Activated CD8-positive, alpha-beta memory T cell treated with anti-CD3 and anti-CD28 coated beads, Interleukin-2, amount 10 ng/mL, durations not matched to agents 7 days and 5 days (primary cell): ENCODE measurements at regions of chr20 and their contacts with region 1.

Region 1: DNA sequence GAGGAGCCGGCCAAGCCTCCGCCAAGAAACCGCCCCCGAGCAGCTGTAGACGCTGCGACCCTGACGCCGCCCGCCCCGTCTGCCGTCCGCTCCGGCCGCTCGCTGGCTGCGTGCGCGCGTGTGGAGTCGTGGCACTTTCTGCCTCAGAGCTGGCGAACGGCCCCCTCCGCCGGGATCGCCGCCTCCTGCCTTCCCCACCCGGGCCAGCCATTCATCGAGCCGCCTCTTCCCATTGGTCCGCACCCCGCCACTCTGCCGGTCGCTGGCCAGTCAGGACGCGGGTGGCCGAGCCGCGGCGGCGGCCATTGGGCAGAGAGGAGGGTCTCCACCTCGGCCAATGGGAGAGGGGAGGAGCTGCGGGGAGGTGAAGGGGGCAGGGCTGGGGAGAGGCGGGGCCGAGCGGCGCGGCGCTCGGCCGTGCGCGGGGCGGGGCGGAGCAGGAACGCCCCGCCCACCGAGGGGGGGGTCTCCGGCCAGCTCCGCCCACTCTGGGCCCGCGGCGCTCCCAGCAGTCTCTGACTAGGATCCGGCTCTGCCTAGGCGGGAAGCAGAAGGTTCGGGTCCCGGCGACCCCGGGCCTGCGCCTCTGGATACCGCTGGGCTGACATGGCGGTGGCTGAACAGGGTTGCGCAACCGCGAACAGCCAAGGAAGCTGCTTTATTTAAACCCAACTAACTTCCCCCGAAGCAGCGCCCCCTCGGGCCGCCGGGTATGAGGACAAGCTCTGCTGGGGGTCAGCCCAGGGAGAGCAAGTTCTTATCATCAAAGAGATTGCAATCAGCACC is at the start of gene RRBP1:
- DNase-seq: peak; percentile 98
- ATAC-seq: peak; percentile 95
- H3K4me3 Mint-ChIP-seq: peak within 1 kb of the TSS; percentile 76
- H3K27ac Mint-ChIP-seq: peak within 1 kb of the TSS; percentile 84
- H3K4me1 Mint-ChIP-seq: peaks cover 24% of the 10 kb centered on the region
- H3K27me3 Mint-ChIP-seq: peaks cover 37% of the 10 kb centered on the region
- total RNA-seq, gene RRBP1: 55.7 to 59.6 TPM

Region 2: DNA sequence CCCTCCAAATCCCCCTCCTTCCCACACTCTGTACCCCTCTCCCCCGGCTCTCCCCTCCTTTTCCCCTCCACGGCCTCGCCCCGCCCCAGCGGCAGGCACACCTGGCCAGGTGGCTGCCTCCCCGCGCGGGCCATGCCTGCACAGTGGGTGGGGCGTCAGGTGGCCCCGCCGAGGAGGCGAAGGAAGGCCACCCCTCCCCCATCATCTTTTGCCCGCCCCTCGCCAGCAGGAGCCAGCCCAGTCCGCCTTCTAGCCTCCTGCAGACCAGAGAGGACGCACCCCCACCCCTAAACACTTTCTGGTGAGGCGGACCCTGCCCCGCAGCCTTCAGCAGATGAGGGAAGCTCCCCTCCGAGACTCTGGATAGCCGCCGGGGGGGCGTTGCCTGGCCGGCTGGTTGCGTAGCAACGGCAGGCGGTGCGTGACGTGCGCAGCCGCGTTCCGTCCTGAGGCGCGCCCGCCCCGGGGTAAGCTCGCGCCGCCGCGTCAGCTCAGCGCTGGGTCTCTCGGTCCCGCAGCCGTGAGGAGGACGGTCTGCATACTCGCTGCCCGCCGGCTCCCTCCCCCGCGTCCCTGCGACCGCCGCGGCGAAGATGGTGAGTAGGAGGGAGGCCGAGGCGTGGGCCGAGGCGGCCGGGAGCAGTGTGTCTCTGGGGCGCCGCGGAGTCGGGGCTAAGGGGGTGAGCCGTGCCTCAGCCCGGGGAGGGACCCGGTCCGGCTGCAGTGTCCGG is 112.5 kb before region 1 on chr20 and contains the start of gene DSTN:
- CTCF ChIA-PET with region 1: interaction called, 27 read pairs
- DNase-seq: peak; percentile 91
- ATAC-seq: peak; percentile 90
- H3K4me3 Mint-ChIP-seq: peak within 1 kb of the TSS; percentile 88
- H3K27ac Mint-ChIP-seq: peak within 1 kb of the TSS; percentile 89
- H3K4me1 Mint-ChIP-seq: peaks cover 29% of the 10 kb centered on the region
- H3K27me3 Mint-ChIP-seq: peaks cover 21% of the 10 kb centered on the region
- total RNA-seq, gene DSTN: 55.8 to 78.3 TPM

Region 3: GRCh38 chr20:17655865-17656479 is 26.3 kb before region 1 on chr20:
- CTCF ChIA-PET with region 1: no interaction called
- DNase-seq: no peak
- ATAC-seq: no peak
- H3K4me3 Mint-ChIP-seq: no peak overlapping the region
- H3K27ac Mint-ChIP-seq: no peak overlapping the region
- H3K4me1 Mint-ChIP-seq: peaks cover 6% of the 10 kb centered on the region
- H3K27me3 Mint-ChIP-seq: no peaks in the 10 kb centered on the region

Region 4: GRCh38 chr20:17796091-17796563 is 113.8 kb after region 1 on chr20:
- CTCF ChIA-PET with region 1: no interaction called
- DNase-seq: no peak
- ATAC-seq: no peak
- H3K4me3 Mint-ChIP-seq: no peak overlapping the region
- H3K27ac Mint-ChIP-seq: no peak overlapping the region
- H3K4me1 Mint-ChIP-seq: no peaks in the 10 kb centered on the region
- H3K27me3 Mint-ChIP-seq: peaks cover 40% of the 10 kb centered on the region

Region 5: GRCh38 chr20:17849901-17850683 is 167.8 kb after region 1 on chr20:
- CTCF ChIA-PET with region 1: interaction called, 14 read pairs
- DNase-seq: no peak
- ATAC-seq: no peak
- H3K4me3 Mint-ChIP-seq: no peak overlapping the region
- H3K27ac Mint-ChIP-seq: no peak overlapping the region
- H3K4me1 Mint-ChIP-seq: peaks cover 44% of the 10 kb centered on the region
- H3K27me3 Mint-ChIP-seq: peaks cover 17% of the 10 kb centered on the region

Region 6: GRCh38 chr20:17898548-17898994 is 216.3 kb after region 1 on chr20:
- CTCF ChIA-PET with region 1: interaction called, 30 read pairs
- DNase-seq: peak; percentile 79
- ATAC-seq: peak; percentile 81
- H3K4me3 Mint-ChIP-seq: no peak overlapping the region
- H3K27ac Mint-ChIP-seq: no peak overlapping the region
- H3K4me1 Mint-ChIP-seq: peaks cover 39% of the 10 kb centered on the region
- H3K27me3 Mint-ChIP-seq: peaks cover 48% of the 10 kb centered on the region

Region 7: DNA sequence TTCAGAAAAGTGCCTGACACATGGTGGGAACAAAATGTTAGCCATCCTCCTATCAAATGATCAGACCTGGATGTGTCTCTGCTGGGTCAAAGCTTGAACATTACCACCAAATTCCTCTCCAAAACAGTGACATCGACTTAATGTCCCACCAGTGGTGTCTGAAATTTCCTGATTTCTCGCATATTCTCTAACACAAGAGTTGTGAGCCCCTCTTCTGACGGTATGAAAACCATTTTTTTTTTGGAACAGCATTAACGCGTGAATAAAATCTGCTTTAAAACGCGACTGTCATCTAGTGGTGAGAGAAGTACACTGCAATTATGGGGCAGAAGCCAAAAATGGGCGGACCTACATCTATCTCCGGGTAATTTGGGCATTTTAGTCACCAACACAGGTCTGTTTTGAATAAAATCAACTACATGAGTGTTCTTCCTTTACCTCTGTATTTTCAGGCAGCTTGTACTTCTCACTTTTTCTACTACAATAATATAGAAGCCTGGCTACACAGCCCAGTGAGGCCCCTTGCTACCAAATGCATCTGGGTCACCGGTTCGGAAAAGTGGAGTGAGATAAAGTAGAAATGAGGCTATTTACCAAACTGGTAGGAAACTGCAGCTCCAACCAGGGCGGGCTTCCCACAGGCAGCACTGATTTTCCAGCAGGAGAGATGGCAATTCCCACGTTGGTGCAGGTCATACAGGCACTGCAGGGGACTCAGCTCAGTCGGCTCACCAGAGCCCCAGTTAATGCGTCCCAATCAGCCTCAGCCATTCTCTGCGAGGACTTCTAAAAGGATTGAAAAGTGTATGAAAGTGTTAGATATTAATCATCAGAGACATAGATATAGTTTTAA is 313.9 kb after region 1 on chr20:
- CTCF ChIA-PET with region 1: interaction called, 14 read pairs
- DNase-seq: peak; percentile 59
- ATAC-seq: peak; percentile 52
- H3K4me3 Mint-ChIP-seq: no peak overlapping the region
- H3K27ac Mint-ChIP-seq: no peak overlapping the region
- H3K4me1 Mint-ChIP-seq: peaks cover 40% of the 10 kb centered on the region
- H3K27me3 Mint-ChIP-seq: no peaks in the 10 kb centered on the region